ENCODE measurements at regions of chr3 and their contacts with region 1.

Region 1: GRCh38 chr3:113495035-113495434 is 19.9 kb downstream of the SPICE1 start:
- DNase-seq: no peak
- H3K4me3 ChIP-seq: no peak overlapping the region
- H3K27ac ChIP-seq: no peak overlapping the region
- H3K4me1 ChIP-seq: no peaks in the 10 kb centered on the region
- H3K27me3 ChIP-seq: no peaks in the 10 kb centered on the region
- CTCF ChIP-seq: peak; percentile 31 to 56 (median 36)
- POLR2A ChIP-seq: no peak

Region 2: DNA sequence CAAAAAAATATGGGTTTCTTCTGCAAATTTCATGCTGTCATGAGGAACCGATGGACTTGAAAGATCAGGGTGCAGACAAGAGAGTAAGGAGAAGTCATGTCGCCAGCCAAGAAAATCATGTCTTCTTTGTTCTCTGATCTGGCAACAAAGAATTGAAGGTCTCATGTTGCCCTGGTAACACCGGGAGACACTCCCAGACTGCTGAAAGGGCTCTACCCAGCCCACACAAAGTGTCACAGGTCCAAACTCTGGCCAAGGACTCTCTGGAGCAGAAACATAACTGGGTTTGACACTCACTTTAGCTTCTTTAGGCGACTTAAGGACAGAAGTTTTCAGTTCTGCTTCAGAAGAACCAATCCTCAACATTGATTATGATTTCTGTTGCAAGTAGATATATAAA is 80.2 kb after region 1 on chr3:
- intact Hi-C with region 1: loop called (anchors 10 kb)
- DNase-seq: no peak
- H3K4me3 ChIP-seq: no peak overlapping the region
- H3K27ac ChIP-seq: no peak overlapping the region
- H3K4me1 ChIP-seq: peaks cover 0 to 9% (median 0%) of the 10 kb centered on the region in 3 donors
- H3K27me3 ChIP-seq: no peaks in the 10 kb centered on the region
- CTCF ChIP-seq: no peak
- POLR2A ChIP-seq: no peak